ENCODE measurements at regions of chr14 and their contacts with region 1.

Region 1: GRCh38 chr14:22955702-22956569 is 954 bp downstream of the HAUS4 start:
- DNase-seq: no peak
- ATAC-seq: no peak
- H3K4me3 Mint-ChIP-seq: peak overlapping the region; percentile 91
- H3K27ac Mint-ChIP-seq: peak overlapping the region; percentile 94
- H3K4me1 Mint-ChIP-seq: peaks cover 20% of the 10 kb centered on the region
- H3K27me3 Mint-ChIP-seq: no peaks in the 10 kb centered on the region
- CTCF ChIP-seq: no peak

Region 2: GRCh38 chr14:22939684-22940083 is 16.3 kb before region 1 on chr14:
- CTCF ChIA-PET with region 1: interaction called, 24 read pairs
- POLR2A ChIA-PET with region 1: interaction called, 8 read pairs
- DNase-seq: no peak
- ATAC-seq: no peak
- H3K4me3 Mint-ChIP-seq: no peak overlapping the region
- H3K27ac Mint-ChIP-seq: no peak overlapping the region; the same call in 1 of the 2 replicates
- H3K4me1 Mint-ChIP-seq: 0 out of 2 replicates have a peak, but pooled peaks cover 2% of the 10 kb centered on the region
- H3K27me3 Mint-ChIP-seq: no peaks in the 10 kb centered on the region
- CTCF ChIP-seq: no peak

Region 3: DNA sequence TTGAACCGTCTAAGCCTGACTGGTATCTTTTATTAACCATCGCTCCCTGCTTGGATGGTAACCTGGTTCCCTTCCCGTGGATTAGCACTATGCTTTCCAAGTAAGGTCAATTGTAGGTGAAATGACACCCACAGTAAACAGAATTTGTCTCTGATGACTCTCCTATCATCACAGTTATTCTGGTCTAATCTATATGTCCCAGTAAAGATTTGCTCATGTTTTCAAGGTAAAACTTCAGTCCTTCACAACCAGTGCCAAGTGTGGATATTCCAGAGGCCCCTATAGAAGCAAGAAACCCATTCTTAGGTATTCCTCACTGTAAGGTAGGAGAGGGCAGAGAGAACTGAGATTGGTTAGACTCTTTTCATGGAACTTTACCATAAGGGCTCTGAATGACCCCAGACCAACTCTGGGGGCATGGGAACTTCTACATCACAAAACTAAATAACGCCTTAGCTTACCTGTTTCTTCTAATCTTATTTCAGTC is 10.9 kb after region 1 on chr14:
- CTCF ChIA-PET with region 1: interaction called, 3 read pairs
- POLR2A ChIA-PET with region 1: interaction called, 10 read pairs
- DNase-seq: no peak
- ATAC-seq: no peak
- H3K4me3 Mint-ChIP-seq: no peak overlapping the region
- H3K27ac Mint-ChIP-seq: no peak overlapping the region; the same call in 1 of the 2 replicates
- H3K4me1 Mint-ChIP-seq: no peaks in the 10 kb centered on the region
- H3K27me3 Mint-ChIP-seq: no peaks in the 10 kb centered on the region
- CTCF ChIP-seq: no peak

Region 4: GRCh38 chr14:22973217-22974032 is 17.5 kb after region 1 on chr14:
- CTCF ChIA-PET with region 1: interaction called, 19 read pairs
- POLR2A ChIA-PET with region 1: interaction called, 19 read pairs
- DNase-seq: peak; percentile 50
- ATAC-seq: peak; percentile 16
- H3K4me3 Mint-ChIP-seq: no peak overlapping the region
- H3K27ac Mint-ChIP-seq: peak overlapping the region; percentile 17
- H3K4me1 Mint-ChIP-seq: peaks cover 27% of the 10 kb centered on the region
- H3K27me3 Mint-ChIP-seq: no peaks in the 10 kb centered on the region
- CTCF ChIP-seq: peak; percentile 51

Measured in WTC11 (cell line).